ENCODE measurements at regions of chr2 and their contacts with region 1.

Region 1: GRCh38 chr2:95389245-95390119 is 13.0 kb upstream of the FAHD2A start:
- DNase-seq: peak; percentile 74
- ATAC-seq: peak; percentile 96
- H3K4me3 Mint-ChIP-seq: no peak overlapping the region
- H3K27ac Mint-ChIP-seq: no peak overlapping the region
- H3K4me1 Mint-ChIP-seq: no peaks in the 10 kb centered on the region
- H3K27me3 Mint-ChIP-seq: peaks cover 2% of the 10 kb centered on the region

Region 2: DNA sequence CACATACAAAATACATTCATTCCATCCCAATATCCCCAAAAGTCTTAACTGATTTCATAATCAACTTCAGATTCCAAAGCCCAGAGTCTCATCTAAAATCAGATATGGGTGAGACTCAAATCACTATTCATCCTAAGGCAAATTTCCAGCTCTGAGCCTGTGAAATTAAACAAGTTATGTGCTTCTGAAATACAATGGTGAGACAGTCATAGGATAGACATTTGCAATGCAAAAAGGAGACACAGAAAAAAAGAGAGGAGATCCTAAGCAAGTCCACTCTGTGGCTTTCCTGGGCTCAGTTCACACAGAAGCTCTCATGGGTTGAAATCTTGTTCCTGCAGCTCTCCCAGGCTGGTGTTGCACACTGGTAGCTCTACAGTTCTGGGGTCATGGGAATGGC is 163.8 kb before region 1 on chr2:
- CTCF ChIA-PET with region 1: no interaction called
- POLR2A ChIA-PET with region 1: no interaction called
- intact Hi-C with region 1: no loop called
- DNase-seq: no peak
- ATAC-seq: no peak
- H3K4me3 Mint-ChIP-seq: no peak overlapping the region
- H3K27ac Mint-ChIP-seq: no peak overlapping the region
- H3K4me1 Mint-ChIP-seq: no peaks in the 10 kb centered on the region
- H3K27me3 Mint-ChIP-seq: no peaks in the 10 kb centered on the region

Region 3: GRCh38 chr2:95345566-95346230 is 43.8 kb before region 1 on chr2:
- CTCF ChIA-PET with region 1: interaction called, 11 read pairs
- POLR2A ChIA-PET with region 1: no interaction called
- intact Hi-C with region 1: no loop called
- DNase-seq: peak; percentile 82
- ATAC-seq: peak; percentile 91
- H3K4me3 Mint-ChIP-seq: peak overlapping the region; percentile 66
- H3K27ac Mint-ChIP-seq: no peak overlapping the region
- H3K4me1 Mint-ChIP-seq: no peaks in the 10 kb centered on the region
- H3K27me3 Mint-ChIP-seq: peaks cover 34% of the 10 kb centered on the region

Region 4: GRCh38 chr2:95728878-95729596 is 339.6 kb after region 1 on chr2:
- CTCF ChIA-PET with region 1: interaction called, 3 read pairs
- POLR2A ChIA-PET with region 1: no interaction called
- intact Hi-C with region 1: loop called (anchors 1 to 5 kb)
- DNase-seq: peak; percentile 61
- ATAC-seq: peak; percentile 63
- H3K4me3 Mint-ChIP-seq: no peak overlapping the region
- H3K27ac Mint-ChIP-seq: no peak overlapping the region
- H3K4me1 Mint-ChIP-seq: no peaks in the 10 kb centered on the region
- H3K27me3 Mint-ChIP-seq: peaks cover 3% of the 10 kb centered on the region

Measured in activated CD4-positive, alpha-beta T cell treated with anti-CD3 and anti-CD28 coated beads for 36 hours (primary cell).